HCT116 (cell line): ENCODE measurements at regions of chr17 and their contacts with region 1.

Region 1: GRCh38 chr17:78497115-78497540 is 80.1 kb downstream of the DNAH17 start:
- DNase-seq: peak; percentile 75
- ATAC-seq: peak; percentile 95
- H3K4me3 ChIP-seq: no peak overlapping the region
- H3K27ac ChIP-seq: no peak overlapping the region
- H3K4me1 ChIP-seq: no peaks in the 10 kb centered on the region
- H3K27me3 ChIP-seq: no peaks in the 10 kb centered on the region
- CTCF ChIP-seq: peak; percentile 85 to 91 (median 89)
- POLR2A ChIP-seq: no peak
- RAD21 ChIP-seq: peak; percentile 99

Region 2: GRCh38 chr17:77465358-77466041 is 1031.6 kb before region 1 on chr17:
- CTCF ChIA-PET with region 1: no interaction called
- POLR2A ChIA-PET with region 1: no interaction called
- RAD21 ChIA-PET with region 1: no interaction called
- intact Hi-C with region 1: no loop called
- DNase-seq: no peak
- ATAC-seq: no peak
- H3K4me3 ChIP-seq: no peak overlapping the region
- H3K27ac ChIP-seq: no peak overlapping the region
- H3K4me1 ChIP-seq: peaks cover 6 to 20% of the 10 kb centered on the region in 2 experiments
- H3K27me3 ChIP-seq: no peaks in the 10 kb centered on the region
- CTCF ChIP-seq: no peak
- POLR2A ChIP-seq: no peak
- RAD21 ChIP-seq: no peak

Region 3: DNA sequence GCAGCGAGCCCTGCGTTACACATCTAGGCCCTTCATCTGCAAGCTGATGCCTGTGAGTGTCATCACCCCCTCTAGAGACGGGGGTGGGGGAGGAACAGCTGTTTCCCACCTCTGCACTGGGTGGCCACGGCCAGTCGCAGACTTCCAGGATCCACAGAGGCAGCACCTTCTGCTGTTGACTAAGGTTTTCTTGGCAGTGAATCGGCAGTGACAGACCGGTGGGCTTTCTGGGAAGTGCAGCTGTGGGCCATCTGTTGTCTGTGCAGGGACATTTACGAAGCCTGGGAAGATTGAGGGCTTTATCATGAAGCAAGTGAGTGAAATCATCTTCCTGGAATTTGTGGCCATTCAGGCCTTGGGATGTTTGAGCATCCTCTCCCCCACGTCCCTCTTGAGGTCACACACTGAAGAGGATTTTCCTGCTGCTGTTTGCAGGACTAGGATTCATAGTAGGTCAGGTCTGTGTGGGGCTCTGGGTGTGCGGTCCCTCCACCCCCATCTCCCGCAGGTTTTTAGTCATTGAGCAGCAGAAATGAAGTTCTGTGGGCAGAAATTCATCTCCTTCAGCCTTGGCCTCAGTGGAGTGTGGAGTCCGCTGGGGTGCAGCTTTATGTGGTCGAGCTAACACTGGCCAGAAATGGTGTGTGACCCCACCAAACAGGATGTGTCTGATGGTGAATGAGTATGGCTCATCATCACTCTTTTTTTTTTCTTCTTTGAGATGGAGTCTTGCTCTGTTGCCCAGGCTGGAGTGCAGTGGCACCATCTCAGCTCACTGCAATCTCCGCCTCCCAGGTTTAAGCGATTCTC is 106.7 kb before region 1 on chr17:
- CTCF ChIA-PET with region 1: no interaction called
- POLR2A ChIA-PET with region 1: no interaction called
- RAD21 ChIA-PET with region 1: no interaction called
- intact Hi-C with region 1: no loop called
- DNase-seq: no peak
- ATAC-seq: peak; percentile 63
- H3K4me3 ChIP-seq: no peak overlapping the region
- H3K27ac ChIP-seq: no peak overlapping the region
- H3K4me1 ChIP-seq: peaks cover 13 to 32% of the 10 kb centered on the region in 2 experiments
- H3K27me3 ChIP-seq: no peaks in the 10 kb centered on the region
- CTCF ChIP-seq: peak in 2 of 3 experiments; percentile 39 to 53; a peak in 4 of 6 replicates
- POLR2A ChIP-seq: no peak
- RAD21 ChIP-seq: no peak

Region 4: DNA sequence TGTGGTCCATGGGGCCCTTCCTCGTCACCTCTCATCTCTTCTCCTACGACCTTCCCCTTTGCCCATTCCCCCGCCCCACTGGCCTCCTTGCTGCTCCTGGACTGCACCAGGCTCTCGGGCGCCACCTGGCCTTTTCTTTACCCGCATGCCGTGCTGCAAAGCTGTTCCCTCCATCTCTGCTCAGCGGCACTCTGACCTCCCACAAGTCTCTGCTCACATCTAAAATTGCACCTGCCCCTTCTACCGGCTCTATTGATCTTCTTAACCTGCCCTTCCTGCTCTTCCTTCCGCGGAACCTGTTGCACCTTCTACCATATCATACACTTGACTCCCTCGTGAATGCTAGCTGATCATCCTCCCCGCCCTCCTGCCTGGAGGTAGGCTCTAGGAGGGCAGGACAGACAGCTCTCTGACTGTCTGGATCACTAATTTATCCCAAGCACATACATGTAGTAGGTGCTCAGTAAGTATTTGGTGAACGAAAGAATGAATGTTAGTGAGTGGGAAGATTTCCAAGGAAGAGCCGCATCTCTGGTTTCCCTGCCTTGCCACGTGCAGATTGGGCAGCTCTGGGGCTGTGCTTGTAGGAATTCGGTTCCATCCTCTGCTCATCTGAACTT is 62.7 kb after region 1 on chr17:
- CTCF ChIA-PET with region 1: interaction called, 20 read pairs
- POLR2A ChIA-PET with region 1: no interaction called
- RAD21 ChIA-PET with region 1: interaction called in 1 of 2 experiments, 7 read pairs
- intact Hi-C with region 1: no loop called
- DNase-seq: peak; percentile 57
- ATAC-seq: peak; percentile 96
- H3K4me3 ChIP-seq: no peak overlapping the region
- H3K27ac ChIP-seq: no peak overlapping the region
- H3K4me1 ChIP-seq: peaks cover 3 to 14% of the 10 kb centered on the region in 2 experiments; a peak in 3 of 4 replicates
- H3K27me3 ChIP-seq: peaks cover 12% of the 10 kb centered on the region; the same call in 1 of the 2 replicates
- CTCF ChIP-seq: peak; percentile 69 to 87 (median 78); a peak in 5 of 6 replicates
- POLR2A ChIP-seq: no peak
- RAD21 ChIP-seq: peak; percentile 69

Region 5: DNA sequence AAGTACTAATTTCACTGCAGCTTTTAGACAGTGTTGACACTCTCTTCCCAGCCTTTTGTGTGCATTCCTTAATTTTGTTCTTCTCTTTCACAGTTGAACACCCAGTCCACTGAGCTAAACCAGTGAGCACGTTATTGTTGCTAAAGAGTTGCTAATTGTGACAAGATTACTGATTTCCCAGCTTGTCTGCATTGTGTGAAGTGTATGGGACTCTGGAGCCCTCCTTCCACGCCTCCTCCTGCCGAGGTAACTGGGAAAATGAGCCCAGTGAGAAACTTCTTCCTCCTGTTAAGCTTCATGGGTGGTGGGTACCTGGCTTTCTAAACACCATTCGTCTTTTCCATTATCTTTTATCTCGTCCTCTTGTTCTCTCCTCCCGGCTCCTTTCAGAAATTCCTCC is 109.9 kb after region 1 on chr17:
- CTCF ChIA-PET with region 1: interaction called, 20 read pairs
- POLR2A ChIA-PET with region 1: no interaction called
- RAD21 ChIA-PET with region 1: no interaction called
- intact Hi-C with region 1: loop called (anchors 1 kb)
- DNase-seq: no peak
- ATAC-seq: no peak
- H3K4me3 ChIP-seq: no peak overlapping the region
- H3K27ac ChIP-seq: no peak overlapping the region
- H3K4me1 ChIP-seq: no peaks in the 10 kb centered on the region
- H3K27me3 ChIP-seq: peaks cover 14% of the 10 kb centered on the region; the same call in 1 of the 2 replicates
- CTCF ChIP-seq: no peak
- POLR2A ChIP-seq: no peak
- RAD21 ChIP-seq: no peak

Region 6: DNA sequence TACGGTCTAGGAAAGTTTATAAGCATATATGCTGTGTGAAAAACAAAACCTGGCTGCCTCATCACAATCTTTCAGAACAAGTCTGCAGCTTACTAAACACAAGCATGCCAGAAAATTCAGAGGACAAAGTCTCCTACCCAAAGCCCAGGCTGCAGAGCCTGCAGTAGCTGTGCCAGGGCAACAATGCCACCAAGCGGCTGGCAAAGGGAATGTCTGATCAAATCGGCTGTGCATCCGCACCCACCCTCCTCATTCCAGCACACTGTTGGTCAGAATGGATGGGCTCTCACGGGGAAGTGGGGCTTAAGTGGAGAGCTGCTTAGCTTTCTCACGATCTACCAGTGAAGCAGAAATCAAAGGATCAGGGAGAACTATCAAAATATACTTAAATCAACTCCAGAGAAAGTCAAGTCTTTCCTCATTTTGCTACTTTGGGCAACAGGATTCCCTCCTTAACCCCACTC is 211.4 kb after region 1 on chr17:
- CTCF ChIA-PET with region 1: interaction called, 41 read pairs
- POLR2A ChIA-PET with region 1: no interaction called
- RAD21 ChIA-PET with region 1: interaction called, 6 to 9 read pairs
- intact Hi-C with region 1: loop called (anchors 1 kb)
- DNase-seq: peak; percentile 56
- ATAC-seq: peak; percentile 99
- H3K4me3 ChIP-seq: no peak overlapping the region
- H3K27ac ChIP-seq: no peak overlapping the region
- H3K4me1 ChIP-seq: peaks cover 8 to 14% of the 10 kb centered on the region in 2 experiments
- H3K27me3 ChIP-seq: no peaks in the 10 kb centered on the region
- CTCF ChIP-seq: peak; percentile 91 to 100 (median 96)
- POLR2A ChIP-seq: no peak
- RAD21 ChIP-seq: peak; percentile 98

Region 7: DNA sequence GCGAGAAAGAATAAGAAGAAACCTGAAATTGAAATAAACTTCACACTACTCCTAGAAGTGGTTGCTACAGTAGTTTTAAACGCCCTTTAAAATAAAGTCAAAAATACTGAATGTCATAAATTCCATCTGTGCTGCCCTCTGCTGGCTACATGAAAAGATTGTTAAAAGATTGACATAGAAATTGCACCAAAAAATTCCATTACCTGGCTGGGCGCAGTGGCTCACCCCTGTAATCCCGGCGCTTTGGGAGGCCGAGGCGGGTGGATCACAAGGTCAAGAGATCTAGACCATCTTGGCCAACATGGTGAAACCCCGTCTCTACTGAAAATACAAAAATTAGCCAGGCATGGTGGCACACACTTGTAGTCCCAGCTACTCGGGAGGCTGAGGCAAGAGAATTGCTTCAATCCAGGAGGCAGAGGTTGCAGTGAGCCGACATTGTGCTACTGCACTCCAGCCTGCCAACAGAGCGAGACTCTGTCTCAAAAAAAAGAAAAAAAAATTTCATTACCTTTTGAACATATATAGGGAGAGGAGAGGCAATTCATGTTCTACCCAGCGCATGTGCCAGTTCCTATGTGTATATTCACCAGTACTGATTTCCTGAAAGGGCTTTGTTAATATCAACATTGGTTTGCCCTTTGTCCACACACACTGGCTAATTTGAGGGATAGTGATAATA is 248.4 kb after region 1 on chr17:
- CTCF ChIA-PET with region 1: interaction called, 8 read pairs
- POLR2A ChIA-PET with region 1: no interaction called
- RAD21 ChIA-PET with region 1: no interaction called
- intact Hi-C with region 1: loop called (anchors 1 kb)
- DNase-seq: no peak
- ATAC-seq: peak; percentile 69
- H3K4me3 ChIP-seq: no peak overlapping the region
- H3K27ac ChIP-seq: no peak overlapping the region
- H3K4me1 ChIP-seq: peaks cover 12 to 18% of the 10 kb centered on the region in 2 experiments; a peak in 3 of 4 replicates
- H3K27me3 ChIP-seq: no peaks in the 10 kb centered on the region
- CTCF ChIP-seq: peak; percentile 59 to 73 (median 60)
- POLR2A ChIP-seq: no peak
- RAD21 ChIP-seq: peak; percentile 63

Region 8: DNA sequence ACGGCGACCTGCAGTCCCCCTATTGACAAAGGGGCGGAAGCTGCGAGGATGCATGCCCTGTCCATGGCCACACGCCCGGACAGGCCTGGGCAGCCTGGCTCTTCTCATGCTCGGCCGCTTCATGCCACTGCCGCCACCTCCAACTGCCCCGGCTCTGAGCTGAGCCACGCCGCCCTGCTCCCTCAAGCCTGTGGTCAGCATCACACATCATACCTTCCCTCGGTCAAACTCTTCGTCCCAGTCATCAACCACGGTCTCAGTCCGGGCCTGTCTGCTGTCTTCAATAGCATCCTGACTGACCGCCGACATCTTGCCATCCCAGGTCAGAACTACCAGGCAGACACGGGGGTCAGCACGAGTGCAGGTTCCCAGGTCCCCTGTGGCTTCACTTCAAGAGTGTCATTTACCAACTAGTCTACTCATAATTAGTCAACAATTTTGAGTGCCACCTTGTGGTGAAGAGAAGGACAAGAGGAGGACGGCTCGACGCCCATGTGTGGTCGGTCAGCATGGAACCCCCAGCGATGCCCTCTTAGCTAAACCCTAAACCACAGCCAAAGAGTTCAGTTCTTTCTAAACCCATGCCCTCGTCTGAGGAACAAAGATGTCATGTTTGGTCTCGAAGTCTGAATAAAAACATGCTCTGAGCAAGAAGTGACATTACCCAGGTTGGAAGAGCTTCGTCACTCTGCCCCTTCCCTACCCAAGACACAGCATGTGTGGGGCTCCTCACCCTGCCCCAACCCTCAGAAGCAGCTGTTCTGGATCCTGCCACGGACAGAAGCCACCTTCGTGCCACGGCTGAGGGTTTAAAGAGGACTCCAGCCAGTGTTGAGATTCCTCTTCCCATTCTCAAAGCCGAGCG is 301.8 kb after region 1 on chr17:
- CTCF ChIA-PET with region 1: interaction called, 7 read pairs
- POLR2A ChIA-PET with region 1: no interaction called
- RAD21 ChIA-PET with region 1: no interaction called
- intact Hi-C with region 1: loop called (anchors 1 kb)
- DNase-seq: no peak
- ATAC-seq: peak; percentile 73
- H3K4me3 ChIP-seq: no peak overlapping the region
- H3K27ac ChIP-seq: no peak overlapping the region
- H3K4me1 ChIP-seq: no peaks in the 10 kb centered on the region
- H3K27me3 ChIP-seq: no peaks in the 10 kb centered on the region
- CTCF ChIP-seq: peak in 2 of 3 experiments; percentile 47 to 66; a peak in 4 of 6 replicates
- POLR2A ChIP-seq: no peak
- RAD21 ChIP-seq: peak; percentile 50

Region 9: DNA sequence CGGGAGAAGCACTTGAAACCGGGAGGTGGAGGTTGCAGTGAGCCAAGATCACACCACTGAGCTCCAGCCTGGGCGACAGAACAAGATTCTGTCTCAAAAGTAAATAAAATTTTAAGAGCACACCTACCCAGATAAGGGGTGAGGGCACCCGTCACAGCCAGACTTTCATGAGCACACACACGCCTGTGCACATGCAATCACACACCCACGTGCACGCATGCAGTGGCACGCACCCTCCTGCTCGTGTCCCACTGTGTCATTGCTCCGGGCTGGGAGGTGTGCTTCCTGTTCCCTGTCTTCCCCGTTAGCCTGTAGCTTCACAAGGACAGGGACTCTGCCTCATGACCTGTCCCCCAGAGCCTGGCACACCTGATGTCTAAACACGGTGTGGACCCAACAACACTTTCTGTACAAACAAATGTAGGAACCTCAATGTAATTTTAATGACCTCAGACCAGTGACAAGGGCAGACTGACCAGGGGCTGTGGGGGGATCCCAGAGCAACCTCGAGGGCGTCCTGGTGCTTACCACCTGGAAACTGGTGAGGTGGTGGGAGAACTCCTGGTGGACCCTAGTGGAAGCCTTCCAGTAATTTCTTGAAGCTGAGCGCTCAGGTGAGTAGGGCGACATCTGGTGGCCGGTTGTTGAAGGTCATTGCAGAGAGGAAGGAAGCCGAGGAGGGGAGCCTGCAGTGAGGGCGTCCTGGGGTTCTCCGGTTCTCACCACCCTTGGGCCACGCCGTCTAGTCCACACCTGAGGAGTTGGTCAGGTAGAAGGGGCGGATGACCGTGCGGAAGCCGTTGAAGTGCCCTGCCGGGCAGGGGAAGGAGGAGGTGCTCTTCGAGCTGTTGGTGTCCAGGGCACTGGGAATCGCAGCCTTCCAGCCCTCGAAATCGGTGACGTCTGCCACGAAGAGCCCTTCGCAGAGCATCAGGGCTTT is 474.0 kb after region 1 on chr17:
- CTCF ChIA-PET with region 1: interaction called, 8 read pairs
- POLR2A ChIA-PET with region 1: no interaction called
- RAD21 ChIA-PET with region 1: no interaction called
- intact Hi-C with region 1: loop called (anchors 2 kb)
- DNase-seq: peak; percentile 65
- ATAC-seq: peak; percentile 69
- H3K4me3 ChIP-seq: no peak overlapping the region
- H3K27ac ChIP-seq: peak overlapping the region; percentile 13
- H3K4me1 ChIP-seq: peaks cover 8 to 28% of the 10 kb centered on the region in 2 experiments; a peak in 3 of 4 replicates
- H3K27me3 ChIP-seq: no peaks in the 10 kb centered on the region
- CTCF ChIP-seq: peak; percentile 92 to 99 (median 94)
- POLR2A ChIP-seq: no peak
- RAD21 ChIP-seq: peak; percentile 98